Activated CD8-positive, alpha-beta T cell treated with anti-CD3 and anti-CD28 coated beads, Interleukin-2, amount 10 ng/mL, durations not matched to agents 7 days and 5 days (primary cell): ENCODE measurements at regions of chr11 and their contacts with region 1.

Region 1: DNA sequence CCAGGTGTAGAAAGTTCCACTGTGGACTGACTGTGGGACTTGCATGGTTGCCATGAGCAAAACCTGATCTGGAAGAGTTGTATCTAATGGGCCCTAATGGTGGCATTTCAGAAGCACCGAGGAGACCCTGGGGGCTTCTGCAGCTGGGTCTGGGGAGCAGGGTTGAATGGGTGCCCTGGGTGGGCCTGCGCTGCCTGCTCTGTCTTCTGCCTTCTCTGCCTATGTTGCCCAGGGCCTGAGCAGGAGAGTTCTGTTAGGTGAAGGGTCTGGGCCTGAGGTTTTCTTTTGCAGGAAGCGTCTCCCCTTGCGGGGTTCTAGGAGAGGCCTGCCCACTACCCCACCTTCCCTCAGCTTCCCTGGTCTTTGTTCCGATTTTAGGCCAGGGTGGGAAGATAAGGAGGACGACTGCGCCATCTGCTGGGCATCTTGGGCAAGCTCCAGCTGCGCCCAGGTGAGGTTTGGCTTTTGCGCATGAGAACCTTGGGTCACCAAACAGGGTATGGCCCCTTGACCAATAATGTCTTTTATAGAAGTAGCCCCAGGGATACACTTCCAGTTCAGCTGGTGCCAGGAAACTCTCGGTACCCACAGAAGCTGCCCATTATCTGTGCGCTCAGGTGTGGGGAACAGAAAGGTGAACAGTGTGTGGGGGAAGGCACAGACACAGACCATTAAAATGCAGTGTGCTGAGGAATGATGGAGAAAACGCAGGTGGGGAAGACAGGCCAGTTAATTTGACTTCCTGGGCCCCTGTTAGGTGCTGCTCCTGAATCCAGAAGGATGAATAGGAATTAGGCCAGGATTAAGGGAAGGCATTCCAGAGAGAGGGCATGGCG is 23.2 kb downstream of the COMMD9 start:
- DNase-seq: peak; percentile 63
- ATAC-seq: peak; percentile 74
- H3K4me3 Mint-ChIP-seq: no peak overlapping the region
- H3K27ac Mint-ChIP-seq: no peak overlapping the region
- H3K4me1 Mint-ChIP-seq: no peaks in the 10 kb centered on the region
- H3K27me3 Mint-ChIP-seq: no peaks in the 10 kb centered on the region

Region 2: GRCh38 chr11:35619116-35619862 is 646.7 kb before region 1 on chr11:
- CTCF ChIA-PET with region 1: interaction called, 11 read pairs
- POLR2A ChIA-PET with region 1: interaction called, 3 read pairs
- DNase-seq: no peak
- ATAC-seq: peak; percentile 34
- H3K4me3 Mint-ChIP-seq: peak overlapping the region; percentile 12
- H3K27ac Mint-ChIP-seq: no peak overlapping the region
- H3K4me1 Mint-ChIP-seq: peaks cover 10% of the 10 kb centered on the region
- H3K27me3 Mint-ChIP-seq: peaks cover 57% of the 10 kb centered on the region

Region 3: DNA sequence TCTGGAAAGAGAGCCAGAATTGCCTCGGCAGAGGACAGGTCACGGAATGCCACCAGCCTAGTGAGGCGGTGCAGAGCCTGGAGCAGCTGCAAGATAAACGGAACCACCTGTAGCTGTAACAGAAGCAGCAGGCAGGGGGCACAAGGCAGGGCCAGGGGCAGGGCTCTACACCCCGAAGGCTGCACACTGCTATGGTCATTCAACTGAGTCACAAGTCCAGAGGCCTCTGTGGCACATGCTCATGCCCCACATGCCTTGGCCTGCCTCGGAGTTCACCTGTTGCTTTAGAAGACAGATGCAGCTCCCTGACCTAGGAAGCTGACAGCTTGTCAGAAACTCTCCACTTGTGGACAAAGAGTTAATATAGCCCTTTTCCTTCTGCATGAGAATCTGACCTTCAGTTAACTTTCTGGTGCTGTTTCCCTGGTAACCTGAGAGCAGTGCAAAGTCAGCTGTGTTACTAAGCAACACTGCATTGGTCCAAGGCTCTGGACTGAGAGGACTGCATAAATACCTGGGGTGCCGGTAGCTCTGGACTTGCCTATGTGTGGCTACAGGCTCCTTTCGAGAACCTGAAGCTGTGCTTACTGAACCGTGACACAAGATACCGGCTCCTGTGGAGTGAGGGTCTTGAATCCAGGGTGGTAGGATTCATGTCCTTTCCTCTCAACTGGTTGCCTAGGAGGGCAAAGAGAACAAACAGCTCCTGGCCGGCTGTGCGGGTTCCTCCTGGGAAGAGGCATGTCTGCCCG is 12.7 kb after region 1 on chr11:
- CTCF ChIA-PET with region 1: interaction called, 18 read pairs
- POLR2A ChIA-PET with region 1: no interaction called
- DNase-seq: no peak
- ATAC-seq: no peak
- H3K4me3 Mint-ChIP-seq: no peak overlapping the region
- H3K27ac Mint-ChIP-seq: no peak overlapping the region
- H3K4me1 Mint-ChIP-seq: no peaks in the 10 kb centered on the region
- H3K27me3 Mint-ChIP-seq: no peaks in the 10 kb centered on the region

Region 4: GRCh38 chr11:36390963-36391471 is 125.0 kb after region 1 on chr11:
- CTCF ChIA-PET with region 1: no interaction called
- POLR2A ChIA-PET with region 1: no interaction called
- DNase-seq: no peak
- ATAC-seq: no peak
- H3K4me3 Mint-ChIP-seq: no peak overlapping the region
- H3K27ac Mint-ChIP-seq: no peak overlapping the region
- H3K4me1 Mint-ChIP-seq: peaks cover 30% of the 10 kb centered on the region
- H3K27me3 Mint-ChIP-seq: peaks cover 7% of the 10 kb centered on the region